ENCODE measurements at regions of chr20 and their contacts with region 1.

Region 1: GRCh38 chr20:57329608-57330221 is at the start of gene SPO11:
- H3K4me3 ChIP-seq: no peak within 1 kb of the TSS
- H3K27ac ChIP-seq: no peak within 1 kb of the TSS
- H3K4me1 ChIP-seq: no peaks in the 10 kb centered on the region
- CTCF ChIP-seq: no peak

Region 2: DNA sequence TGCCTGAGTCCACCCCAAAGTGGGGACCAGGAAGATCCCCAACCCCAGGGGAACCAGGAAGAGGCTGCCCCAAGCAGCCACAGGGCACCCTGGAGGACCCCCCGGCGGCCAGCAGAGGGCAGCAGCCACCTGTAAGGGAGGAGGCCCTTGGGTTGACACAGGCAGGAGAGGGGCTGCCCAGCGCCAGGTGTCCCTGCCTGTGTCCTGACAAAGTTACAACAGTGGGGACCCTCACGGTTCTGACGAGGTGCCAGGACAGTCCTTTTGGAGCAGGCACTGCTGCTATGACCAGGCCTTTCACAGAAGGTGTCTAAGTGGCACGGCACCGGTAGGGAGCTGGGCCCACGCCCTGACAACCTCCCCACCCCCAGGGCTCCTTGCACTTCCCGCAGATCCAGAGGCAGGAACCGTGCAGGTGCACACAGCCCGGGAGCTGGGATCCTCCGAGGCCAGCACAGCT is 240.0 kb before region 1 on chr20:
- CTCF ChIA-PET with region 1: interaction called, 88 read pairs
- POLR2A ChIA-PET with region 1: interaction called, 3 read pairs
- H3K4me3 ChIP-seq: no peak overlapping the region
- H3K27ac ChIP-seq: no peak overlapping the region
- H3K4me1 ChIP-seq: no peaks in the 10 kb centered on the region
- CTCF ChIP-seq: peak; percentile 79

Region 3: DNA sequence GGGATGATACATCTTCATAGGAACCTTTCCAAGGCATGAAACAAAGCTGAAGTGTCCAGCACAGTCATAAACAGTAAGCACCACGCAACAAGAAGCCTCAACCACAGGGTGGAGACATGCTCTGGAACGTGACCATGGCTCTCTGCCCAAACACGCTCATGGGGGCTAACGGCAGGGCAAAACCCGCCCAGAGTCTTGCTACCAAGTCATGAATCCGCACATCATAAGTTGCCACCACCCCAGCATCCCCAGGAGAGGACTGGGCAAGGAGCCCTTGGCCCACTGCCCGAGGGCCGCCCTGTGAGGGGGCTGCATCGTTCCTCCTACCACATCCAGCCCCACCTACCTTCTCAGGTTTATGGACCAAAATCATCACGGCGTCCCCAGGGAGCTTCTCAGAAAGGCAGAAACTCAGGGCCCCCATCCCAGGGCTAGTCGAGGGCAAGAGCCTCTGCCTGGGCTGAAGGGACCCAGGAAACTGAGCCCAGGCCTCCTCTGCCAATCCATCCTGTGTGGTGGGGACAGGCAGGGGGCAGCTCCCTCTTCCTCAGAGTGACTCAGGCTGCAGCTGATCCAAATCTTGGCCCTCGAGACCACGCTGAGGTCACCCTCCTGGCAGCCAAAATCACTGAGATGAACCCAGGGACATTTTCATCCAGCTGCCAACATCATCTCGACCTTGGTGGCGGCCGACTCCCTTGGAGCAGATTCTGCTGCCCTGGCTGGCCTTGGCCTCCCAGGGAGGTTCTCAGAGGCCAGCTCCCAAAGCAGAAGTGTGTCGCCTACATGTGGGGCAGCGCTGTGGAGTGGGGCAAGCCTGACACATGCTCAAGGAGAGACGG is 105.8 kb before region 1 on chr20:
- CTCF ChIA-PET with region 1: interaction called, 14 read pairs
- POLR2A ChIA-PET with region 1: no interaction called
- H3K4me3 ChIP-seq: no peak overlapping the region
- H3K27ac ChIP-seq: no peak overlapping the region
- H3K4me1 ChIP-seq: no peaks in the 10 kb centered on the region
- CTCF ChIP-seq: no peak

Region 4: DNA sequence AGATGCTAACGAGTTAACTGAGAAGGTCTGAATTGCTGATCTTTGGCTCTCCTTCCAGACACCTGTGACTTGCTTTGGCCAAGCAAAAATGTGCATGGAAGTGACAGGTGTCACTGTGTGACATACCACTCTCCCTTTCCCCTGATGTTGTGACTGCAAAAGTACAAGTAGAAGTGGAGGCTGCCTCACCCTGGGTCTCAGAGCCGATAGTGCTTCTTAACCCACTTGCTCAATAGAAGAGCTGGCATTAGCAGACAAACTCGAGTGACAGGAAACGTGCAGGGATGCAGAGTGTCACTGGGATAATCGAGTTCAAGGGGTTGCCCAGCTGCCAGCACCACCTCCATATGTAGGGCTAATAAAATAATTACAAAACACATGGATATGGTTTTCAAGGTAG is 16.5 kb before region 1 on chr20:
- CTCF ChIA-PET with region 1: no interaction called
- POLR2A ChIA-PET with region 1: no interaction called
- H3K4me3 ChIP-seq: no peak overlapping the region
- H3K27ac ChIP-seq: no peak overlapping the region
- H3K4me1 ChIP-seq: no peaks in the 10 kb centered on the region
- CTCF ChIP-seq: no peak

Region 5: DNA sequence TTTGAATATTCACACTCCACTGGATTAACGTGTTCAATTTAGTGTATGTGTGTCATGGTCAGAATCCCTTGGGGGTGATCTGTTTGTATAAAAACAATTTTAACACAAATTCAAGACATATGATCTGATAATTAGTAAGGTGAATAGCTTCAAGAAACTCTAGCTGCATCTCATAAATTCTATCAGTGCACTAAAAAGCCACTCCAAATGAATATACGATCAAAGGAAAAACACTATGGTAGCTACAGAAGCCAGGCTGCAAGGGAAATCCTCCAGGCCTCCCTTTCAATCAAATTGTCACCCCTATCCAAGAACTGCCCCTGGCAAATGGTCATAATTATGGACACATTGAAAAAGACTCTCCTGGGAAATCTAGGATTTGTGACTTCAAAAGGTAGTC is 11.9 kb after region 1 on chr20:
- CTCF ChIA-PET with region 1: interaction called, 74 read pairs
- POLR2A ChIA-PET with region 1: no interaction called
- H3K4me3 ChIP-seq: no peak overlapping the region
- H3K27ac ChIP-seq: no peak overlapping the region
- H3K4me1 ChIP-seq: no peaks in the 10 kb centered on the region
- CTCF ChIP-seq: no peak

Measured in HEK293 (cell line).